B cell (primary cell): ENCODE measurements at regions of chr5 and their contacts with region 1.

Region 1: GRCh38 chr5:160390787-160391696 is 8.8 kb downstream of the FAM200C start:
- DNase-seq: peak; percentile 27
- ATAC-seq: no peak
- H3K4me3 ChIP-seq: no peak overlapping the region
- H3K4me3 Mint-ChIP-seq: no peak overlapping the region
- H3K27ac ChIP-seq: no peak overlapping the region
- H3K27ac Mint-ChIP-seq: no peak overlapping the region
- H3K4me1 ChIP-seq: no peaks in the 10 kb centered on the region
- H3K4me1 Mint-ChIP-seq: no peaks in the 10 kb centered on the region
- H3K27me3 ChIP-seq: no peaks in the 10 kb centered on the region
- H3K27me3 Mint-ChIP-seq: no peaks in the 10 kb centered on the region
- CTCF ChIP-seq: peak; percentile 58

Region 2: GRCh38 chr5:160081495-160081894 is 309.5 kb before region 1 on chr5:
- CTCF ChIA-PET with region 1: interaction called, 4 read pairs
- POLR2A ChIA-PET with region 1: no interaction called
- intact Hi-C with region 1: loop called (anchors 1 kb)
- DNase-seq: no peak
- ATAC-seq: no peak
- H3K4me3 ChIP-seq: no peak overlapping the region
- H3K4me3 Mint-ChIP-seq: no peak overlapping the region
- H3K27ac ChIP-seq: no peak overlapping the region
- H3K27ac Mint-ChIP-seq: no peak overlapping the region
- H3K4me1 ChIP-seq: no peaks in the 10 kb centered on the region
- H3K4me1 Mint-ChIP-seq: peaks cover 3% of the 10 kb centered on the region
- H3K27me3 ChIP-seq: no peaks in the 10 kb centered on the region
- H3K27me3 Mint-ChIP-seq: no peaks in the 10 kb centered on the region
- CTCF ChIP-seq: no peak

Region 3: GRCh38 chr5:160450164-160450932 is 59.3 kb after region 1 on chr5:
- CTCF ChIA-PET with region 1: no interaction called
- POLR2A ChIA-PET with region 1: no interaction called
- intact Hi-C with region 1: no loop called
- DNase-seq: no peak
- ATAC-seq: no peak
- H3K4me3 ChIP-seq: no peak overlapping the region
- H3K4me3 Mint-ChIP-seq: no peak overlapping the region
- H3K27ac ChIP-seq: no peak overlapping the region
- H3K27ac Mint-ChIP-seq: no peak overlapping the region
- H3K4me1 ChIP-seq: peaks cover 2 to 5% of the 10 kb centered on the region in 2 donors
- H3K4me1 Mint-ChIP-seq: peaks cover 10% of the 10 kb centered on the region
- H3K27me3 ChIP-seq: peaks cover 0 to 6% (median 0%) of the 10 kb centered on the region in 4 experiments
- H3K27me3 Mint-ChIP-seq: peaks cover 3% of the 10 kb centered on the region
- CTCF ChIP-seq: no peak